ENCODE measurements at regions of chr3 and their contacts with region 1.

Region 1: GRCh38 chr3:59101231-59101736 is 51.5 kb upstream of the CFAP20DC start:
- DNase-seq: peak; percentile 92
- H3K4me3 ChIP-seq: no peak overlapping the region
- H3K27ac ChIP-seq: peak overlapping the region; percentile 67
- H3K4me1 ChIP-seq: peaks cover 15% of the 10 kb centered on the region
- H3K27me3 ChIP-seq: no peaks in the 10 kb centered on the region
- CTCF ChIP-seq: no peak

Region 2: DNA sequence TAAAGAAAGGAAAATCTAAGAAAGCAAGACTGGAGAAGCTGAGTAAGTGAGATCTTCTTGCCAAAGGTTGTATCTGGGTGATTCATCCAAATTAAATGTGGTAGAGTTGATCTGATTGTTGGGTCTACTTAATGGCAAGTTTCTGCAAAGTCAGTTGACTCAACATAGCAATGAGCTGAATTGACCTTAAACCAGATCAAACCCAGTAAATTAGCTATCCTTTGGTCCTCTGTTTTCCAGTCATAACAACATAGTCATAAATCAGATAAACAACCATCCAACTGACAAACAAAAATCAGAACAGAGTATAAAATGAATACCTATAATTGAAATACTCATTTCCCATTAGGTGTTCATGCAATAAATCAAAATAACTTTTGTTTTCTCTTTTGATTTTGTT is 91.2 kb after region 1 on chr3:
- CTCF ChIA-PET with region 1: no interaction called
- dilution Hi-C with region 1: no loop called
- in situ Hi-C with region 1: no loop called
- intact Hi-C with region 1: loop called (anchors 5 kb)
- DNase-seq: peak; percentile 94
- H3K4me3 ChIP-seq: no peak overlapping the region
- H3K27ac ChIP-seq: peak overlapping the region; percentile 78
- H3K4me1 ChIP-seq: peaks cover 23% of the 10 kb centered on the region
- H3K27me3 ChIP-seq: no peaks in the 10 kb centered on the region
- CTCF ChIP-seq: no peak

Region 3: GRCh38 chr3:59341459-59341858 is 240.2 kb after region 1 on chr3:
- CTCF ChIA-PET with region 1: no interaction called
- dilution Hi-C with region 1: no loop called
- in situ Hi-C with region 1: no loop called
- intact Hi-C with region 1: no loop called
- DNase-seq: no peak
- H3K4me3 ChIP-seq: no peak overlapping the region
- H3K27ac ChIP-seq: no peak overlapping the region
- H3K4me1 ChIP-seq: no peaks in the 10 kb centered on the region
- H3K27me3 ChIP-seq: no peaks in the 10 kb centered on the region
- CTCF ChIP-seq: no peak

Measured in mammary epithelial cell (primary cell).